Thyroid gland (tissue), 4 donors: ENCODE measurements at regions of chr3 and their contacts with region 1.

Region 1: GRCh38 chr3:113136071-113136470 is 75.3 kb upstream of the BOC start:
- DNase-seq: no peak
- H3K4me3 ChIP-seq: no peak overlapping the region
- H3K27ac ChIP-seq: no peak overlapping the region
- H3K4me1 ChIP-seq: no peaks in the 10 kb centered on the region
- H3K27me3 ChIP-seq: no peaks in the 10 kb centered on the region
- CTCF ChIP-seq: peak; percentile 22 to 83 (median 54)
- POLR2A ChIP-seq: no peak

Region 2: GRCh38 chr3:112979240-112979832 is 156.7 kb before region 1 on chr3:
- intact Hi-C with region 1: no loop called
- DNase-seq: no peak
- H3K4me3 ChIP-seq: no peak overlapping the region
- H3K27ac ChIP-seq: no peak overlapping the region
- H3K4me1 ChIP-seq: peaks cover 0 to under 1% of the 10 kb centered on the region in 2 donors
- H3K27me3 ChIP-seq: no peaks in the 10 kb centered on the region
- CTCF ChIP-seq: peak in 5 of 6 experiments; percentile 44 to 76 (median 64)
- POLR2A ChIP-seq: no peak

Region 3: DNA sequence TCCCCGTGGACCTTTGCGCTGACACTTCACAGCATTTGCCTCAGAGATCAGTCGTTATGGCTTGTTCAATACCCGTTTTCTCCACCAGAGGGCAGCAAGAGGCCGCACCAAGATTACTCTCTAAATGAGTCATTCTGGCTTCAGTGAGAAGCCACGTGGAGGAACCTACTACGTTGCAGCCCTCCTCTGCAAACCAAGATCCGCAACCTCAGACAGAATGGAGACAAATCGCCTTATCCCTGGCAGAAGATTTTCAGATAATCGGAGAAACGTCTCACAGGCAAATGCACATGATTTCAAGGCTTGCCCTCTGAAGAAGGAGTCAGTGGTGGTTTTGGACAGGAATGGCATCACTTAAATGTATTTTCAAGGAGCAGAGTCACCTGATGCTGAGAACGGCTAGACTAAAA is 84.8 kb before region 1 on chr3:
- intact Hi-C with region 1: loop called (anchors 10 kb)
- DNase-seq: peak; percentile 86 to 87
- H3K4me3 ChIP-seq: no peak overlapping the region
- H3K27ac ChIP-seq: peak overlapping the region; percentile 19 to 67 (median 62)
- H3K4me1 ChIP-seq: peaks cover 3 to 20% of the 10 kb centered on the region in 2 donors
- H3K27me3 ChIP-seq: no peaks in the 10 kb centered on the region
- CTCF ChIP-seq: peak; percentile 82 to 98 (median 92)
- POLR2A ChIP-seq: no peak

Region 4: DNA sequence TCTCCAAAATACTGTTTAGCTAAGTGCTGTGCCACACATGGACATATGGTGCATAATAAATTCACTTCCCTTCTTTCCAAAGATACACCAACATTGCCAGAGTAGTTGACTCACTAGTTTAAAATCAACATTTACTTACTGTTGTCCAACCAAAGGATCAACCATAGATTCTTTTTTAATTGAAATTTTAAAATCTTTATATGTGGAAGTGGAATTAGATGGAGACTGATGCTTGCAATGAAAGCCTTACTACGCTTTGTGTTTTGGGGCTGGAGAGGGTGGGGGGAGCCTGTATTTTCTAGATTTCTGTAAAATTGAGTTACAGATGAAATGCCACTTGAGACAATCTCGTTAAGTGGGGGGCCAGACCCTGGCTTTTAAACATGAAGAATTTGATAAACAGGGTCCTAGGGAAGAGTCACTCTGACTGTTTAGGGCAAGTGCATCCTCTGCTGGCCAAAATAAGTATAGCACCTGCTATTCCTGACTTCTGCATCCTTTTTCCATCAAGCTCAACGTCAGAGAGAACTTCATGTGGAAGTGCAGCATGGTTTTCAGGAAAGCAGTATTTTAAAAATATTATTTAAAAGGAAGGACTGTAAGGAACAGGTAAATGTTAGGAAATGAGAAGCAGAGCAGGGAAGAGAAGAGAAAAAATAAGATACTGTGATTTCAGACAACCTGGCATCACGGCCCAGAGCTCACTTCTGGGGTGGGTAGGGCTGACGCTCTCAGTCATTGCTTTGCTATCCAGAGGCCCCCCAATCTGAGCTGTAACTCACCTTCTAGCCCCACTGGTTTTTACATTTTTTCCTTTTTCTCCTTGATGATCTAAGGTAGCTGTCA is 152.0 kb after region 1 on chr3:
- intact Hi-C with region 1: loop called (anchors 2 kb)
- DNase-seq: peak; percentile 64
- H3K4me3 ChIP-seq: no peak overlapping the region
- H3K27ac ChIP-seq: peak overlapping the region in 1 of 3 donors; percentile 5
- H3K4me1 ChIP-seq: peaks cover 0 to 11% of the 10 kb centered on the region in 2 donors
- H3K27me3 ChIP-seq: no peaks in the 10 kb centered on the region
- CTCF ChIP-seq: peak; percentile 98 to 100 (median 99)
- POLR2A ChIP-seq: no peak